ENCODE measurements at regions of chr11 and their contacts with region 1.

Region 1: GRCh38 chr11:16749666-16750065 is 11.2 kb downstream of the C11orf58 start:
- DNase-seq: no peak
- H3K4me3 Mint-ChIP-seq: no peak overlapping the region
- H3K27ac Mint-ChIP-seq: peak overlapping the region; percentile 74
- H3K4me1 Mint-ChIP-seq: peaks cover 30% of the 10 kb centered on the region
- H3K27me3 Mint-ChIP-seq: no peaks in the 10 kb centered on the region

Region 2: GRCh38 chr11:16738193-16738946 is 11.3 kb before region 1 on chr11 and contains the start of gene C11orf58:
- intact Hi-C with region 1: loop called (anchors 1 kb)
- DNase-seq: peak; percentile 94
- H3K4me3 Mint-ChIP-seq: peak within 1 kb of the TSS; percentile 74
- H3K27ac Mint-ChIP-seq: peak within 1 kb of the TSS; percentile 73
- H3K4me1 Mint-ChIP-seq: peaks cover 20% of the 10 kb centered on the region
- H3K27me3 Mint-ChIP-seq: peaks cover 3% of the 10 kb centered on the region
- total RNA-seq, gene C11orf58: 135 and 162 TPM in 2 replicates